ENCODE measurements at regions of chr11 and their contacts with region 1.

Region 1: GRCh38 chr11:22169833-22170232 is 23.1 kb upstream of the ANO5 start:
- DNase-seq: no peak
- ATAC-seq: peak in 1 of 4 donors; percentile 60
- H3K4me3 ChIP-seq: no peak overlapping the region
- H3K27ac ChIP-seq: no peak overlapping the region
- H3K4me1 ChIP-seq: no peaks in the 10 kb centered on the region
- H3K27me3 ChIP-seq: no peaks in the 10 kb centered on the region
- CTCF ChIP-seq: peak; percentile 55

Region 2: GRCh38 chr11:22208151-22208858 is 38.5 kb after region 1 on chr11:
- intact Hi-C with region 1: loop called in 1 of 2 experiments (anchors 1 kb)
- DNase-seq: no peak
- ATAC-seq: peak; percentile 27 to 92 (median 56)
- H3K4me3 ChIP-seq: peak overlapping the region; percentile 0
- H3K27ac ChIP-seq: peak overlapping the region; percentile 13
- H3K4me1 ChIP-seq: peaks cover 46% of the 10 kb centered on the region
- H3K27me3 ChIP-seq: no peaks in the 10 kb centered on the region
- CTCF ChIP-seq: no peak

Region 3: DNA sequence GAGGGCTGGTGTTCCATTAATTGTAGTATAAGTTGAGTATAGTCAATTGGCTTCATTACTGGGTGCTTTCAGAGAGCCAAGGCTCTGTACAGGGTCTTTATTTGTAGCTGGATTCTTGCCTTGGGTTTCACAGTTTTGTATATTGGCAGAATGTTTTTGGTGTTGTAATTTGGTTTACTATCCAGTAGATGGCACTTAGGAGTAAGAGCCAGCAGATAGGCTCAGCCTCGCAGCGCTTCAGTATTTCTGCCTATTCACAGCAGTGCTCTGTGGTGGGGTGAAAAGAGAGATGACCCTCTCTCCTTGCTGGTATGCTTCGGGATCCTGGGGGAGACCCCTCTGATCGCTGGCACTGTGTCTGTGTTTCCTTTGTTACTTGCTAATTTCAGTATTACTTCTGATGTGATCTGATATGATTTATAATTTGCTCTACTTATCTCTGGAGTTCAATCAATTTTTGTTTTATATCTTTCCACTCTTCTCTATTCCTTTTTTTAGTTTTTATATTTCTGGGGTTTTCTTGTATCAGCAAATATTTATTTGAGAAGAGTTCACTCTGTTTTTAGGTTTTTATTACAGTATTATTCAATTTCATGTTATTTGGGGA is 75.3 kb after region 1 on chr11:
- intact Hi-C with region 1: loop called in 1 of 2 experiments (anchors 10 kb)
- DNase-seq: peak; percentile 10 to 50
- ATAC-seq: peak; percentile 57 to 97 (median 86)
- H3K4me3 ChIP-seq: no peak overlapping the region
- H3K27ac ChIP-seq: peak overlapping the region; percentile 33
- H3K4me1 ChIP-seq: no peaks in the 10 kb centered on the region
- H3K27me3 ChIP-seq: no peaks in the 10 kb centered on the region
- CTCF ChIP-seq: peak; percentile 56

Region 4: GRCh38 chr11:22304337-22304961 is 134.6 kb after region 1 on chr11:
- intact Hi-C with region 1: loop called (anchors 5 kb)
- DNase-seq: no peak
- ATAC-seq: peak in 3 of 4 donors; percentile 30 to 67 (median 36)
- H3K4me3 ChIP-seq: no peak overlapping the region
- H3K27ac ChIP-seq: no peak overlapping the region
- H3K4me1 ChIP-seq: no peaks in the 10 kb centered on the region
- H3K27me3 ChIP-seq: peaks cover 0 to 3% (median 0%) of the 10 kb centered on the region in 3 donors
- CTCF ChIP-seq: peak; percentile 61